GM10248 (cell line): ENCODE measurements at regions of chr20 and their contacts with region 1.

Region 1: GRCh38 chr20:5788385-5788895 is 38.2 kb downstream of the SHLD1 start:
- DNase-seq: peak; percentile 81
- CTCF ChIP-seq: peak; percentile 63

Region 2: DNA sequence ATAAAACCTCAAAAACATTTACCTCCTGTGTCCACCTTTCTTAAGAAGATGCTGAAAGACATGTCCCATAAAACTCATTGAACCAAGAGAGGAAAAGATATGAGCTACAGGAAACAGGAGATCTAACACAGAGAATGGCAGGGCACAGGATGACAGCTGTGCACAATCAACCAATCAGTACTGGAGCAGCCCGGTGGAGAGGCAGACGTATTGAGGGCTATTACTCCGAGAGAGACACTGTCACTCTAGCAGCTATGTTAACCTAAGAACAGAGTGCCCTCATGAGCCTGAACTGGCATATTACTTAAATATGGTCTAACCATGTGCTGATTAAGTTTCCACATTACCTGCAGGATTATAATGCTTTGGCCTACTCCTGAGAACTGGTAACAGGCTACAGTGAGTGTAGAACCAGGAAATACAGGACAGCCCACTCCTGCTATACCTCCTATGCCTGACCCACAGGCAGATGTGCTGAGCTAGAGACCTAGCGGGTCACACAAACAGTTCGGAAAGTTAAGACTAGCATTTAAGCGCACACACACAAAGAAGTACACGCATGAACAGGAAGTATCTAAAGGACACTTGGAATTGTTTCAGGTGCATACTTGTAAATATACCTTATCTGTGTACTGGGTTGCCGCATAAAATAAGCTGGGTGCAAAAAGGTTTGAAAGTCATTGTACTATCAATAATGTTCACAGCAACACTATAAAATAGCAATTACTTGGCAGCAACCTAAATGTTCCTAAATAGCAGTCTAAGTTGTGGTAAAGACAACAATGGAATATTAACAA is 237.5 kb before region 1 on chr20:
- CTCF ChIA-PET with region 1: interaction called, 19 read pairs
- POLR2A ChIA-PET with region 1: no interaction called
- DNase-seq: no peak
- CTCF ChIP-seq: no peak

Region 3: GRCh38 chr20:5557123-5557522 is 231.3 kb before region 1 on chr20:
- CTCF ChIA-PET with region 1: interaction called, 54 read pairs
- POLR2A ChIA-PET with region 1: interaction called, 4 read pairs
- DNase-seq: peak; percentile 50
- CTCF ChIP-seq: peak; percentile 69

Region 4: GRCh38 chr20:5569021-5569420 is 219.4 kb before region 1 on chr20:
- CTCF ChIA-PET with region 1: interaction called, 38 read pairs
- POLR2A ChIA-PET with region 1: no interaction called
- DNase-seq: no peak
- CTCF ChIP-seq: peak; percentile 31

Region 5: GRCh38 chr20:5580936-5581708 is 207.3 kb before region 1 on chr20:
- CTCF ChIA-PET with region 1: interaction called, 11 read pairs
- POLR2A ChIA-PET with region 1: no interaction called
- DNase-seq: no peak
- CTCF ChIP-seq: no peak

Region 6: GRCh38 chr20:5592823-5593739 is 195.4 kb before region 1 on chr20:
- CTCF ChIA-PET with region 1: interaction called, 14 read pairs
- POLR2A ChIA-PET with region 1: no interaction called
- DNase-seq: no peak
- CTCF ChIP-seq: no peak

Region 7: GRCh38 chr20:5806457-5807263 is 18.2 kb after region 1 on chr20:
- CTCF ChIA-PET with region 1: interaction called, 22 read pairs
- POLR2A ChIA-PET with region 1: no interaction called
- DNase-seq: no peak
- CTCF ChIP-seq: no peak